B cell (primary cell): ENCODE measurements at regions of chr18 and their contacts with region 1.

Region 1: DNA sequence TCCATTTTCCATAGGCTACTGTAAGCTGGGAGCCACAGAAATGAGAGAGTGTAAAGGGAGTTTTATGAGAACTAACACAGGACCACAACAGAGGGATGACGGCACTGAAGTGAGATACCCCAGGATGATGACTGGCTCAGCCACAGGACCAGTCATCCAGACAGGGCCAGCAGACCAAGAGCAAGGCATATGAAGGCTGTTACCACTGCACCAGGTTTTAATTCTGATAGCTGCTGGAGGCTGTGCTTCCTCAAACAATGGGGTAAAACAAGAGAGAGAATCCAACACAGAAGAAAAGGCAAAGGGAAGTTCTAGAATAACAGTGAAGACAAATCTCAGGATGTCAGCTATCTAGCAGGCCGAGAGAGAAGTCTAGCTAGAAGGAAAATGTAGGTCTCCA is 94.9 kb downstream of the BCL2 start:
- DNase-seq: no peak
- ATAC-seq: peak; percentile 43
- H3K4me3 ChIP-seq: no peak overlapping the region
- H3K4me3 Mint-ChIP-seq: peak overlapping the region; percentile 20
- H3K27ac ChIP-seq: peak overlapping the region; percentile 32 to 72
- H3K27ac Mint-ChIP-seq: peak overlapping the region; percentile 57
- H3K4me1 ChIP-seq: peaks cover 18 to 24% of the 10 kb centered on the region in 2 donors
- H3K4me1 Mint-ChIP-seq: peaks cover 55% of the 10 kb centered on the region
- H3K27me3 ChIP-seq: no peaks in the 10 kb centered on the region
- H3K27me3 Mint-ChIP-seq: no peaks in the 10 kb centered on the region
- CTCF ChIP-seq: no peak

Region 2: DNA sequence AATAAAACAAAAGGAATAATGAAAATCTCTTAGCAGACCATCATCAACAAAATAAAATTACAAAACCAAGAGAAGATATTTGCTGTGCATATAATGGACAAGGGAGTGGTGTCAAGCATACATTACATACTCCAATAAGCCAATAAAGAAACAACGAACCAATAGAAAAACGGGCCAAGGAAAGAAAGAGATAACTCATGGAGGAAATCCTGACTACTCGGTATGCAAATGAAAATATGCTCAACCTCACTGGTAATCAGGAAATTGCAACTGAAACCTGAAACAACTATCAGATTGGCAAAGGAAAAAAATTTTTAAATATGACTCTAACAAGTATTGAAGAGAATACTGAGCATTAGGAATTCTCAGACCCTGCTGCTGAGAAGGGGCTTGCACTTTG is 10.2 kb after region 1 on chr18:
- CTCF ChIA-PET with region 1: interaction called, 3 read pairs
- POLR2A ChIA-PET with region 1: interaction called, 3 read pairs
- intact Hi-C with region 1: loop called (anchors 1 kb)
- DNase-seq: no peak
- ATAC-seq: no peak
- H3K4me3 ChIP-seq: no peak overlapping the region
- H3K4me3 Mint-ChIP-seq: peak overlapping the region; percentile 58
- H3K27ac ChIP-seq: peak overlapping the region in 1 of 2 donors; percentile 32
- H3K27ac Mint-ChIP-seq: peak overlapping the region; percentile 12
- H3K4me1 ChIP-seq: peaks cover 11 to 20% of the 10 kb centered on the region in 2 donors
- H3K4me1 Mint-ChIP-seq: peaks cover 47% of the 10 kb centered on the region
- H3K27me3 ChIP-seq: no peaks in the 10 kb centered on the region
- H3K27me3 Mint-ChIP-seq: no peaks in the 10 kb centered on the region
- CTCF ChIP-seq: no peak

Region 3: GRCh38 chr18:63284827-63285733 is 60.5 kb after region 1 on chr18:
- CTCF ChIA-PET with region 1: no interaction called
- POLR2A ChIA-PET with region 1: no interaction called
- intact Hi-C with region 1: loop called (anchors 5 kb)
- DNase-seq: peak; percentile 82
- ATAC-seq: peak; percentile 95
- H3K4me3 ChIP-seq: peak overlapping the region in 4 of 5 experiments; percentile 15 to 51 (median 32)
- H3K4me3 Mint-ChIP-seq: no peak overlapping the region
- H3K27ac ChIP-seq: peak overlapping the region; percentile 93 to 95
- H3K27ac Mint-ChIP-seq: no peak overlapping the region
- H3K4me1 ChIP-seq: peaks cover 69 to 73% of the 10 kb centered on the region in 2 donors
- H3K4me1 Mint-ChIP-seq: peaks cover 24% of the 10 kb centered on the region
- H3K27me3 ChIP-seq: no peaks in the 10 kb centered on the region
- H3K27me3 Mint-ChIP-seq: no peaks in the 10 kb centered on the region
- CTCF ChIP-seq: no peak